ENCODE measurements at regions of chr5 and their contacts with region 1.

Region 1: GRCh38 chr5:150143350-150144245 is 12.0 kb downstream of the PDGFRB start:
- DNase-seq: no peak
- H3K4me3 ChIP-seq: peak overlapping the region; percentile 23
- CTCF ChIP-seq: no peak

Region 2: DNA sequence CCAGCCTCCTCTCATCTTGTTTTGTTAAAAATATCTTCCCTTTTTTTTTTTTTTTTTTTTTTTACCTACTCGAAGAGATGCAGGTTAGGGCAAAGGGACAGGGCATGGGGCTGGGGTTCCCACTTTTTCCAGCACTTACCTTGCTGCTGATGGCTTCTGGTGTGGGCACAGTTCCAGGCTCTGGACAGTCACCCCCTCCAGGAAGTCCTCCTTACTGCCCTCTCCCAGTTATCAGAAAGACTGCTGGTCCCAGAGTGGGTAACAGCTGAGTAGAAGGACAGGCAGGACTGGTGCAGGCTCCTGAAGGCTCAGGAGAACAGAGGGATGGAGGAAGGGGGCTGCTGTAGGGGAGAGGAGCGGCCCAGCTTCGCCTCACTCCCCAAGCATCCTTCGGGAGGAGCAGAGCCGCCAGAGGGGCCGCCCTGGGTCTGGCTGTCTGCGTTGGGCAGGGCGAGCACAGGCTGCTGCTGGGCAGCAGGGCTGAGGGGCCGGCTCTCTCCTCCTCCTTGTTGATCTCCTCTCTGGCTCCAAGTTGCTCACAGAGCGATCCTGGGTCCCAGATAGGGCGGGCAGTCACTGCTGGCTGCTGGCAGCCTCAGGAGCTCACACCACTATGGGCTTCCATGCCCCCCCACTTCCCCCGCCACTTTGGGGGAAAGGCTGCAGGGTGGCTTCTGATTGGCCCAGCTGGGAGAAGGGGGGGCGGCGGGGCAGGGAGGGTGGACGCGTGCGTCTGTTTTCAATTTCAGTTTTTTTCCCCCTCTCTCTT is 11.8 kb after region 1 on chr5 and contains the start of gene PDGFRB:
- CTCF ChIA-PET with region 1: interaction called, 22 read pairs
- POLR2A ChIA-PET with region 1: interaction called, 115 read pairs
- DNase-seq: no peak
- H3K4me3 ChIP-seq: peak within 1 kb of the TSS; percentile 74
- CTCF ChIP-seq: no peak